ENCODE measurements at regions of chr19 and their contacts with region 1.

Region 1: DNA sequence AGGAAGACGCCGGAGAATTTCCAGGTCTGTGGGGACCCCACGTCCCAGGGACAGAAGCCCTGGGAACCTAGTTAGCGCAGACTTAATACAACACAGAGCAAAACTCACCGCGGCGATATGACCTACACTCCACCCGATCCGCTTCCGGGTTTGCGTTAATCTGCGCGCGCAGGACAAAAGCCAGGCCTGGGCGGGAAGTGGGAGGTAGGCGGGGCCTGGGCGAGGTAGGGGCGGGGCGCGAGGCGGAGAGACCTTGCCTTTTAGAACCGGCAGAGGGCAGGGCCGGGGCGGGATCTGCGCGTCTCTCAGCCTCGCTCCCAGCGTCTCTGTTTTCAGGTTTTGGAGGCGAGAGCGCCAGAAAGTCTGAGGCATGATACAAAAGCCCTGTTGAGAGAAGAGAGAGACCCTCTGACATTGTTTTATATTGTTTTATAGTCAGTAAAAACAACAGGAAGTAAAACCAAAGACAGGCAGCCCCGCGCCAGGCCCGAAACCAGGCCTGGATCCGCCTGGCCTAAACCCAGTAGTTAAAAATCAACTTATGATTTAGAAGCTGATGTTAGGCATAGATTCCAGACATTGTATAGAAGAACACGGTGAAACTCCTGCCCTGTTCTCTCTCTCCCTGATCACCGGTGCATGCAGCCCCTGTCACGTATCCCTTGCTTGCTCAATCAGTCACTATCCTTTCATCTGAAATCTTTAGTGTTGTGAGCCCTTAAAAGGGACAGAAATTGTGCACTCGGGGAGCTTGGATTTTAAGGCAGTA is at the start of gene ZNF611:
- DNase-seq: peak; percentile 97 to 98
- H3K4me3 ChIP-seq: peak within 1 kb of the TSS; percentile 92
- H3K4me3 Mint-ChIP-seq: peak within 1 kb of the TSS; percentile 73
- H3K27ac Mint-ChIP-seq: peak within 1 kb of the TSS; percentile 36
- H3K4me1 ChIP-seq: peaks cover 12% of the 10 kb centered on the region
- H3K4me1 Mint-ChIP-seq: peaks cover 10% of the 10 kb centered on the region
- H3K27me3 ChIP-seq: no peaks in the 10 kb centered on the region
- H3K27me3 Mint-ChIP-seq: no peaks in the 10 kb centered on the region
- CTCF ChIP-seq: peak in 1 of 2 experiments; percentile 19
- total RNA-seq, gene ZNF611: 27.5 and 28.5 TPM in 2 replicates

Region 2: DNA sequence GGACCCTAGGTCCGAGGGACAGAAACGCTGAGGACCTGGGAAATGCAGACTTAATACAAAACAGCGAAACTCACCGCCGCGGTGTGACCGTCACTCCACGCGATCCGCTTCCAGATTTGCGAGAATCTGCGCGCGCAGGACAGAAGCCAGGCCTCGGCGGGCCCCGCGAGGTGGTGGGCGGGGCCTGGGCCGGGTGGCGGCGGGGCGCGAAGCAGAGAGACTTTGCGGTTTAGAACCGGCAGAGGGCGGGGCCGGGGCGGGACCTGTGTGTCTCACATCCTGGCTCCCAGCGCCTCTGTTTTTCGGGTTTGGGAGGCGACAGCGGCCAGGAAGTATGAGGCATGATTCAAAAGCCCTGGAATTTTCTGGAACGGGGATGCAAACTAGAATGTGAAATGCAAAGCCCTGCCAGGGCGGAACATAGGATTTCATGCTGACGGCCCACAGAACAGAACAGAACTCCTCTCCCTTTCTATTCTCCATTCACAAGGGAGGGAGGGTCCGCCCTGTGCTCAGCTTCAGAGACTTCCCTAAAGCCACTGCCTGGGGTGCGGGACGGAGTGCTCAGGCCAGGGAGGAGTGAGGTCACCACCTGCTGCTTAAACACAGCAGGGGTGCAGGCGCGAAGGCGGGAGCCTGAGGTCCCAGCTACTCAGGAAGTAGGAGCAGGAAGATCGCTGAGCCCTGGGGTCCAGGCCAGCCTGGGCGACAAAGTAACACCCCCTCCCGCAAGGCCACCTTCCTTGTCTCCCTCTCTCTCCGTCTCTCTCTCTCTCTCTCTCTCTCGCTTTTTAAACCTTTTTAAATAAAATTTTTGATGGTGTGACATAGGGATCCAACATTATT is 44.5 kb before region 1 on chr19:
- CTCF ChIA-PET with region 1: no interaction called
- POLR2A ChIA-PET with region 1: no interaction called
- intact Hi-C with region 1: loop called (anchors 2 kb)
- DNase-seq: peak; percentile 92 to 93
- H3K4me3 ChIP-seq: peak overlapping the region; percentile 66
- H3K4me3 Mint-ChIP-seq: peak overlapping the region; percentile 80
- H3K27ac Mint-ChIP-seq: peak overlapping the region; percentile 69
- H3K4me1 ChIP-seq: 0 out of 2 replicates have a peak, but pooled peaks cover 9% of the 10 kb centered on the region
- H3K4me1 Mint-ChIP-seq: peaks cover 26% of the 10 kb centered on the region
- H3K27me3 ChIP-seq: no peaks in the 10 kb centered on the region
- H3K27me3 Mint-ChIP-seq: no peaks in the 10 kb centered on the region
- CTCF ChIP-seq: peak; percentile 18 to 52

Region 3: GRCh38 chr19:52724701-52725514 is 10.2 kb before region 1 on chr19:
- CTCF ChIA-PET with region 1: interaction called, 3 read pairs
- POLR2A ChIA-PET with region 1: no interaction called
- intact Hi-C with region 1: loop called (anchors 1 kb)
- DNase-seq: no peak
- H3K4me3 ChIP-seq: no peak overlapping the region
- H3K4me3 Mint-ChIP-seq: peak overlapping the region; percentile 63
- H3K27ac Mint-ChIP-seq: peak overlapping the region; percentile 80
- H3K4me1 ChIP-seq: peaks cover 35% of the 10 kb centered on the region
- H3K4me1 Mint-ChIP-seq: peaks cover 26% of the 10 kb centered on the region
- H3K27me3 ChIP-seq: no peaks in the 10 kb centered on the region
- H3K27me3 Mint-ChIP-seq: no peaks in the 10 kb centered on the region
- CTCF ChIP-seq: no peak

Region 4: DNA sequence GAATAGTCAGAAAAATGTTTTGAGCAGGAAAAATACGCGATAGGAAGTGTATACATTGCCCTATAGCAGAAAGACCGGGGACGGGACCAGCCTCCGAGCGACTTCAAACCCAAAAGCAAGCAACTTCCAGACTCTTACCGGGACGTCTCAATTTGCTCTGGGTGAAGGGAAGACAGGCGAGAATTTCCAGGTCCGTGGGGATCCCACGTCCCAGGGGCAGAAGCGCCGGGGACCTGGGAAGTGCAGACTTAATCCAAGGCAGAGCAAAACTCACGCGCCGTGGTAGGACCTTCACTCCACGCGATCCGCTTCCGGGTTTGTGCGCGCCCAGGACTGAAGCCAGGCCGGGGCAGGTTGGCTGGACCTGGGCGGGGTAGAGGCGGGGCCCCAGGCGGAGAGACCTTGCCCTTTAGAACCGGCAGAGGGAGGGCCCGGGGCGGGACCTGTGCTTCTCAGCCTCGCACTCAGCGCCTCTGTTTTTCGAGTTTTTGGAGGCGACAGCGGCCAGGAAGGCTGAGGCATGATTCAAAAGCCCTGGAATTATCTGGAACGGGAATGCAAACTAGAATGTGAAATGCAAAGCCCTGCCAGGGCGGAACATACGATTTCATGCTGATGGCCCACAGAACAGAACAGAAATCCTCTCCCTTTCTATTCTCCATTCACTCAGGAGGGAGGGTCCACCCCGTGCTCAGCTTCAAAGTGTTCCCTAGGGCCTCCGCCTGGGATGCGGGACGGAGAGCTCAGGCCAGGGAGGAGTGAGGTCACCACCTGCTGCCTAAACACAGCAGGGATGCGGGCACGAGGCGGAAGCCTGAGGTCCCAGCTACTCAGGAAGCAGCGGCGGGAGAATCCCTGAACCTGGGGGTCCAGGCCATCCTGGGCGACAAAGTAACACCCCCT is 51.6 kb after region 1 on chr19 and contains the start of gene ZNF600:
- CTCF ChIA-PET with region 1: no interaction called
- POLR2A ChIA-PET with region 1: no interaction called
- intact Hi-C with region 1: loop called (anchors 2 kb)
- DNase-seq: peak; percentile 89 to 91
- H3K4me3 ChIP-seq: peak within 1 kb of the TSS; percentile 82
- H3K4me3 Mint-ChIP-seq: peak within 1 kb of the TSS; percentile 79
- H3K27ac Mint-ChIP-seq: peak within 1 kb of the TSS; percentile 39
- H3K4me1 ChIP-seq: no peaks in the 10 kb centered on the region
- H3K4me1 Mint-ChIP-seq: peaks cover 18% of the 10 kb centered on the region
- H3K27me3 ChIP-seq: no peaks in the 10 kb centered on the region
- H3K27me3 Mint-ChIP-seq: no peaks in the 10 kb centered on the region
- CTCF ChIP-seq: peak in 1 of 2 experiments; percentile 12
- total RNA-seq, gene ZNF600: 18.8 and 21.1 TPM in 2 replicates

Measured in Caco-2 (cell line).